ENCODE measurements at regions of chr12 and their contacts with region 1.

Region 1: DNA sequence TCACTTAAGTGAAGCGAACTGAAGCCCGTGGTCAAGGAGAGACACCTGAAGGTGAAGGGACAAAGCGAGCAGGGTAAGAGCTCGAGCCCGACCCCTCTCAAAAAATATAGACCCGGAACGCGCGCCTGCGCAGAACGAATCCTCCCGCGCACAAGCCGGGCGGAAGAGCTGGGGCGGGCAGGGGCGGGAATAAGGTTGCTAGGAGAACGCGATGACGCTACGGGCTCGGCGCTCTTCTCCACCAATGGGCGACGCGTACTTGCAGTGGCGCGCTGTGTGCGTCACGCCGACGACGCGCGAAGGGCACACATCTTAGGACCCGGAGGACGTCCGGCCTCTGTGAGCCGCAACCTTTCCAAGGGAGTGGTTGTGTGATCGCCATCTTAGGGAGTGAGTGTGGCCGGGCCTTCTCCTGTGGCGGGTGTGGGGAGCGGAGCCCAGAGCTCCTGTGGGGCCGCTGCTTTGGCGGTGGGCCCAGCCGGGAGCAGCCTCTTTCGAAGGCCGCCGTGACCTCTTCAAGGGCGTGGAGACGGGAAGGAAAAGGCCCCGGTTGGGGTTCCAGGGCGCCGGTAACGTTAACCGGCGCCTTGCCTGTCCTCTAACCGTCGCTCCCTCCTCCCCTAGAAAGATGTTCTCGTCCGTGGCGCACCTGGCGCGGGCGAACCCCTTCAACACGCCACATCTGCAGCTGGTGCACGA is at the start of gene SLC25A3:
- DNase-seq: peak; percentile 98
- H3K4me3 Mint-ChIP-seq: peak within 1 kb of the TSS; percentile 98
- H3K27ac Mint-ChIP-seq: peak within 1 kb of the TSS; percentile 100
- H3K4me1 Mint-ChIP-seq: peaks cover 6% of the 10 kb centered on the region
- H3K27me3 Mint-ChIP-seq: no peaks in the 10 kb centered on the region
- CTCF ChIP-seq: no peak
- total RNA-seq, gene SLC25A3: 603 and 694 TPM in 2 replicates

Region 2: DNA sequence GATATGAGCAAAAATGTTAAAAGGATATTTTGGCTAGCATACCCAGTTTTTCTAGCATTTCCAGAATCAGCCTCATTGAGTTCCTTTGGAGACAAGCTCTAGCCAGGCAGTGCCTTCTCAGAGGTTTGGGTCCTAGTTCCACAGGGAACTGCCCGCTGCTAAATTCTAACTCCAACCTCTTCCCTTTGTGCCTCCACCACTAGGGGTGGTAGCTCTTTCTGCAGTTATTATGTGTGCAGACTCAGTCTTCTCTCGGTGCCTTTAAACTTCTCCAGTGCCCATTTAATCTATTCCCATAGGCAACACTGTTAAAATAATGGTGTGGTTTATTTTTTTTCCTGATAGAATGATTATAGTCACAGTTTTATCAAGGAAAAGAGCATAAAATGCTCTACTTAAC is 21.5 kb before region 1 on chr12:
- CTCF ChIA-PET with region 1: interaction called, 84 read pairs
- POLR2A ChIA-PET with region 1: interaction called, 36 read pairs
- intact Hi-C with region 1: no loop called
- DNase-seq: no peak
- H3K4me3 Mint-ChIP-seq: no peak overlapping the region
- H3K27ac Mint-ChIP-seq: no peak overlapping the region
- H3K4me1 Mint-ChIP-seq: no peaks in the 10 kb centered on the region
- H3K27me3 Mint-ChIP-seq: no peaks in the 10 kb centered on the region
- CTCF ChIP-seq: no peak

Region 3: DNA sequence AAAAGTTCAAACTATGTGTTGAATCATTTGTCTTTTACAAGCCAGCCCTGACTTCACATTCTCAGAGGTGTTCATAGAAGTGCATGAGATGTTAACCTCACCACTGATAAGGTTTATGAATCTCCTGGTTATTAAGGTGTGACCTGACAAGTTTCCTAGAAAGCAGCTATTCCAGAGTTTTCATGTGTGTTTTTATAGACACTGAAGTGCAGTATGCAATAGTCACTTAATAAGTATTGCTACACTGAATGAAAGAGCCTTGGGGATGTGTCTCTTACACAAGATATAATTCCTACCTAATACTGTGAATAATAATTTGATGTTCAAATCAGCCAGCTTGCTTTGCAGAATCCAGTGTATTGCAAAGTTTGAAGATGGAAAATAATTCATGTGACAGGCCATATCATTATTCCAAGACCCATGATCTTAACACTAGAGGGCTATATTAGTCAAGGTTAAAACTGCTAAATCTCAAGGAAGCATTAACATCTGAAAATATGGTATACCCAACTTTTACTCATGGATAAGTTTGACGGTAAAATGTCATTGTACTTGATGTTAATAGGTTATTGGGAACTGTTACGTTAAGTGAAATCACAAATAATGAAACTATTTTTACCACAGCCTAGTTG is 13.0 kb after region 1 on chr12:
- CTCF ChIA-PET with region 1: interaction called, 18 read pairs
- POLR2A ChIA-PET with region 1: interaction called, 37 read pairs
- intact Hi-C with region 1: no loop called
- DNase-seq: peak; percentile 14
- H3K4me3 Mint-ChIP-seq: no peak overlapping the region
- H3K27ac Mint-ChIP-seq: no peak overlapping the region
- H3K4me1 Mint-ChIP-seq: no peaks in the 10 kb centered on the region
- H3K27me3 Mint-ChIP-seq: no peaks in the 10 kb centered on the region
- CTCF ChIP-seq: peak; percentile 10

Region 4: DNA sequence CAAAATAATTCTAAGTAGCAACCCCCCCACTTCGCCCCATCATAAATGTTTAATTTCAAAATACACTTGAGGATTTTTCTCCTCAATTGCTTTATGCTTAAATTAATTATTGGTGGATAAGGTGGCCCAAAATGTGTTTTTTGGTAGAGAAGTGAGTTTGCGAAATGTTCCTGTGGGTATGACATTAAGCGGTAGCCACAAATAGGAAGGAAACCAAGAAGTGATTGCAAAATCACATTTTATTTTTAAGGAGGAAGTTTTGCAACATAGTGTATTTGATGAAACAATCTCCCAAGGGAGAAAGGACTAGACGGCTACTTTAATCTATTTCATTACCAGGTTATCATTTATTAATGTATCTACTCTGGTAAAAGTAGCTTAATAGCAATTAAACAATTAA is 25.5 kb after region 1 on chr12:
- CTCF ChIA-PET with region 1: interaction called, 4 read pairs
- POLR2A ChIA-PET with region 1: interaction called, 21 read pairs
- intact Hi-C with region 1: no loop called
- DNase-seq: peak; percentile 71
- H3K4me3 Mint-ChIP-seq: no peak overlapping the region
- H3K27ac Mint-ChIP-seq: no peak overlapping the region
- H3K4me1 Mint-ChIP-seq: peaks cover 6% of the 10 kb centered on the region
- H3K27me3 Mint-ChIP-seq: no peaks in the 10 kb centered on the region
- CTCF ChIP-seq: no peak

Region 5: DNA sequence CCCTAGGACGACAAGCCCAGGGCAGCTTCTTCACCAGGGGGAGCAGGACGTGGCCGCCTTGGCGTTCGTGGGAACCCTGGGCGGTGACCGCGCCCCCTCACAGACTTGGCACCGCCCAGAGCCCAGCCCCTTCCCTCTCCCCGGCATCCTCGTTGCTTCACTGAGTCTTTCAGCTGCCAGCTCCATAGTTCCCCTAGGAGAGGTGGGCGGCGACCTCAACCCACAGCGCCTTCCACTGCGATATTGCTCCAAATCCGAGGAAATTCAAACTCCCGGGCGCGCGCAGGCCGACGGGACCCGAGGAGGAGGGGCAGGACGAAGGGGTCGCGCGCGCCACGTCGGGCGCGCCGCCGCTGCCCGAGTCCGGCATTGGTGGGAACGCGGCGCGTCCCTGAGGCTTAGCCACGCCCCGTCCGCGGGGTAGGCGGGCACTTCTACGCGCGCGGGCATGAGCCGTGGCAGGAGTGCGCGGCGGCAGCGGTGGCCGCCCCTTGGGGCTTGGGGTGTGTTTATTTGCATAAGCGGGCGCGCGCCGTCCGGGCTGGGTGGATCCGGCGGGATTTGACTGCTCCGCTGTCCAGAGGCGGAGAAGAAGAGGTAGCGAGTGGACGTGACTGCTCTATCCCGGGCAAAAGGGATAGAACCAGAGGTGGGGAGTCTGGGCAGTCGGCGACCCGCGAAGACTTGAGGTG is 51.4 kb after region 1 on chr12 and contains the starts of genes APAF1 and IKBIP:
- CTCF ChIA-PET with region 1: interaction called, 8 read pairs
- POLR2A ChIA-PET with region 1: interaction called, 255 read pairs
- intact Hi-C with region 1: loop called (anchors 1 kb)
- DNase-seq: peak; percentile 97
- H3K4me3 Mint-ChIP-seq: peak within 1 kb of the TSS; percentile 93
- H3K27ac Mint-ChIP-seq: peak within 1 kb of the TSS; percentile 93
- H3K4me1 Mint-ChIP-seq: peaks cover 7% of the 10 kb centered on the region
- H3K27me3 Mint-ChIP-seq: no peaks in the 10 kb centered on the region
- CTCF ChIP-seq: no peak
- total RNA-seq, gene APAF1: 5.9 and 9.1 TPM in 2 replicates
- total RNA-seq, gene IKBIP: 29.2 and 43.0 TPM in 2 replicates

Region 6: GRCh38 chr12:98870504-98870903 is 277.0 kb after region 1 on chr12:
- CTCF ChIA-PET with region 1: no interaction called
- POLR2A ChIA-PET with region 1: no interaction called
- intact Hi-C with region 1: no loop called
- DNase-seq: no peak
- H3K4me3 Mint-ChIP-seq: no peak overlapping the region
- H3K27ac Mint-ChIP-seq: no peak overlapping the region
- H3K4me1 Mint-ChIP-seq: no peaks in the 10 kb centered on the region
- H3K27me3 Mint-ChIP-seq: no peaks in the 10 kb centered on the region
- CTCF ChIP-seq: no peak